ENCODE measurements at regions of chr2 and their contacts with region 1.

Region 1: GRCh38 chr2:181393472-181393871 is 63.7 kb upstream of the ITGA4 start:
- DNase-seq: peak in 3 of 9 donors; percentile 8 to 14 (median 12)
- ATAC-seq: peak; percentile 77
- H3K4me3 ChIP-seq: peak overlapping the region; percentile 49
- H3K4me3 Mint-ChIP-seq: peak overlapping the region; percentile 46 to 79 (median 66)
- H3K27ac ChIP-seq: peak overlapping the region; percentile 10
- H3K27ac Mint-ChIP-seq: peak overlapping the region; percentile 38 to 84 (median 69)
- H3K4me1 ChIP-seq: peaks cover 20 to 21% of the 10 kb centered on the region in 2 donors
- H3K4me1 Mint-ChIP-seq: peaks cover 20 to 44% (median 32%) of the 10 kb centered on the region in 7 donors
- H3K27me3 ChIP-seq: no peaks in the 10 kb centered on the region
- H3K27me3 Mint-ChIP-seq: no peaks in the 10 kb centered on the region

Region 2: GRCh38 chr2:181140414-181140813 is 253.1 kb before region 1 on chr2:
- CTCF ChIA-PET with region 1: no interaction called
- POLR2A ChIA-PET with region 1: no interaction called
- intact Hi-C with region 1: no loop called
- DNase-seq: peak in 1 of 9 donors; percentile 29
- ATAC-seq: peak; percentile 30
- H3K4me3 ChIP-seq: peak overlapping the region; percentile 20
- H3K4me3 Mint-ChIP-seq: peak overlapping the region; percentile 31 to 94 (median 86)
- H3K27ac ChIP-seq: peak overlapping the region; percentile 78
- H3K27ac Mint-ChIP-seq: peak overlapping the region; percentile 93 to 100 (median 98)
- H3K4me1 ChIP-seq: peaks cover 46 to 66% of the 10 kb centered on the region in 2 donors
- H3K4me1 Mint-ChIP-seq: peaks cover 33 to 83% (median 75%) of the 10 kb centered on the region in 7 donors
- H3K27me3 ChIP-seq: no peaks in the 10 kb centered on the region
- H3K27me3 Mint-ChIP-seq: no peaks in the 10 kb centered on the region

Region 3: DNA sequence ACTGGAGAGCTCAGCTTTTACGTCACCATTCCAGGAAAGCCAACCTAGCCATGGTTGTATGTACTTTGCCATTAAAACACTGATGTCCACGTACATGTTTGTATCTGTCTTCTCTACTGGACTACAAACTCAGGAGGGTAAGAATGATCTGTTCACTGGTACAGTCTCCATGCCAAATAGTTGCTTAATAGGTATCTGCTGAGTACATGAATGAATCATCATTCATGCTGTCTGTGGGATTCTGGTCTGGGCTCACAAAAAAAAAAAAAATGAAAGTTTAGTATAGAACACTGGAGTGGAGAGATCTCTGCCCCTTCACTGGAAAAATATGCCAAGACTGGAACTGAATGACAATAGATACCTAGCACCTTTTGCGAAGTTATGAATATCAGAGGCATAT is 38.8 kb before region 1 on chr2:
- CTCF ChIA-PET with region 1: no interaction called
- POLR2A ChIA-PET with region 1: no interaction called
- intact Hi-C with region 1: loop called in 1 of 2 experiments (anchors 5 kb)
- DNase-seq: no peak
- ATAC-seq: no peak
- H3K4me3 ChIP-seq: no peak overlapping the region
- H3K4me3 Mint-ChIP-seq: no peak overlapping the region
- H3K27ac ChIP-seq: no peak overlapping the region
- H3K27ac Mint-ChIP-seq: peak overlapping the region in 1 of 9 donors; percentile 4
- H3K4me1 ChIP-seq: no peaks in the 10 kb centered on the region
- H3K4me1 Mint-ChIP-seq: peaks cover 4 to 19% (median 6%) of the 10 kb centered on the region in 7 donors
- H3K27me3 ChIP-seq: no peaks in the 10 kb centered on the region
- H3K27me3 Mint-ChIP-seq: no peaks in the 10 kb centered on the region

Region 4: GRCh38 chr2:181380581-181380980 is 12.9 kb before region 1 on chr2:
- CTCF ChIA-PET with region 1: no interaction called
- POLR2A ChIA-PET with region 1: no interaction called
- intact Hi-C with region 1: loop called in 1 of 2 experiments (anchors 2 kb)
- DNase-seq: no peak
- ATAC-seq: no peak
- H3K4me3 ChIP-seq: no peak overlapping the region
- H3K4me3 Mint-ChIP-seq: no peak overlapping the region
- H3K27ac ChIP-seq: no peak overlapping the region
- H3K27ac Mint-ChIP-seq: no peak overlapping the region
- H3K4me1 ChIP-seq: no peaks in the 10 kb centered on the region
- H3K4me1 Mint-ChIP-seq: peaks cover 0 to 6% (median 0%) of the 10 kb centered on the region in 7 donors
- H3K27me3 ChIP-seq: no peaks in the 10 kb centered on the region
- H3K27me3 Mint-ChIP-seq: no peaks in the 10 kb centered on the region

Region 5: DNA sequence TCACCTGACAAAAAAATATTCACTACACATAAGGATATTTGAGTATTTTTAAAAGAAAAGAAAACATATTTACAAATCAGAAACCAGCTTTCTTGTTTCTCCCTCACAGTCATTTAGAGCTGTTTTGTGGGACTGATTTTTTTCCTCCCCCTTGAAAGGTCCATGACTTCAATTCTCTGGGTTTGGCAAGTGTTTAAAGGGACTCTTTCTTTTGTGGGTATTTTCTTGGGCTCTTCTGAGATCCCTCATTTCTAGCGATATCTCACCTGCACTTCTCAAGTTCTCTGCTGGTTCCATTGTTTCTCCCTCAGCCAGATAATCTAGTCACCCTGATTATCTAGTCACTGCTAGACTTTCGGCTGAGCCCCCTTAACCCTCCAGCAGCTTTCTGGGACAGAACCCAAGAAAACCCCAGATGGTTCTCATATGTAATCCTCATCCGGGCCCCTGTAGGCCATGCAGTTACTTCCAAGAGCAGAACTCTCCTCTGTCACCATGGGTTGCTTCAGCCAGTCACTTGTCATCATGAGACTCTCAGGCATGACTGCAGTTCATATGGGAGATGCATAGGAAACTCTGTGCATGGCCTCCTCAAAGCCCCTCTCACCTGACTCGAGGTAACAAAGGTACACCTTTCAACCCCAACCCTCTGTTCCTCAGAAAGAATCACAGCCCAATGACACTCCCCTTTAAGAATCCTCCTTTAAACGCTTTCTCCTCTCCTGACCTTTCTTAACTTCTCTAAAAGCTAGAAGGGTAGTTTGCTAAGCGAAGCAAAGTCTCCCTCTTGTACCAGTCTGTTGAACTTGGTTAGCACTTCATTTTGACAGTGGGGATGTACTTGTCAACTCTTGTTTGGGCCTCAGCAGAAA is 27.0 kb after region 1 on chr2:
- CTCF ChIA-PET with region 1: no interaction called
- POLR2A ChIA-PET with region 1: no interaction called
- intact Hi-C with region 1: no loop called
- DNase-seq: no peak
- ATAC-seq: no peak
- H3K4me3 ChIP-seq: no peak overlapping the region
- H3K4me3 Mint-ChIP-seq: peak overlapping the region in 5 of 10 donors; percentile 12 to 62 (median 37)
- H3K27ac ChIP-seq: no peak overlapping the region
- H3K27ac Mint-ChIP-seq: peak overlapping the region; percentile 3 to 83 (median 56)
- H3K4me1 ChIP-seq: no peaks in the 10 kb centered on the region
- H3K4me1 Mint-ChIP-seq: peaks cover 13 to 26% (median 20%) of the 10 kb centered on the region in 7 donors
- H3K27me3 ChIP-seq: no peaks in the 10 kb centered on the region
- H3K27me3 Mint-ChIP-seq: no peaks in the 10 kb centered on the region

Measured in naive thymus-derived CD4-positive, alpha-beta T cell (primary cell).